ENCODE measurements at regions of chr2 and their contacts with region 1.

Region 1: GRCh38 chr2:36663851-36664695 is 32.4 kb upstream of the VIT start:
- DNase-seq: peak; percentile 76
- ATAC-seq: peak; percentile 95
- H3K4me3 ChIP-seq: peak overlapping the region; percentile 20; the same call in 1 of the 2 replicates
- H3K27ac ChIP-seq: no peak overlapping the region
- H3K4me1 ChIP-seq: peaks cover 4% of the 10 kb centered on the region; the same call in 1 of the 2 replicates
- H3K27me3 ChIP-seq: no peaks in the 10 kb centered on the region
- CTCF ChIP-seq: peak; percentile 95

Region 2: GRCh38 chr2:36461039-36461681 is 202.9 kb before region 1 on chr2:
- CTCF ChIA-PET with region 1: interaction called, 4 read pairs
- POLR2A ChIA-PET with region 1: no interaction called
- intact Hi-C with region 1: loop called (anchors 2 kb)
- DNase-seq: peak; percentile 92
- ATAC-seq: peak; percentile 91
- H3K4me3 ChIP-seq: peak overlapping the region; percentile 22; the same call in 1 of the 2 replicates
- H3K27ac ChIP-seq: peak overlapping the region; percentile 81
- H3K4me1 ChIP-seq: peaks cover 36% of the 10 kb centered on the region
- H3K27me3 ChIP-seq: no peaks in the 10 kb centered on the region
- CTCF ChIP-seq: no peak

Region 3: DNA sequence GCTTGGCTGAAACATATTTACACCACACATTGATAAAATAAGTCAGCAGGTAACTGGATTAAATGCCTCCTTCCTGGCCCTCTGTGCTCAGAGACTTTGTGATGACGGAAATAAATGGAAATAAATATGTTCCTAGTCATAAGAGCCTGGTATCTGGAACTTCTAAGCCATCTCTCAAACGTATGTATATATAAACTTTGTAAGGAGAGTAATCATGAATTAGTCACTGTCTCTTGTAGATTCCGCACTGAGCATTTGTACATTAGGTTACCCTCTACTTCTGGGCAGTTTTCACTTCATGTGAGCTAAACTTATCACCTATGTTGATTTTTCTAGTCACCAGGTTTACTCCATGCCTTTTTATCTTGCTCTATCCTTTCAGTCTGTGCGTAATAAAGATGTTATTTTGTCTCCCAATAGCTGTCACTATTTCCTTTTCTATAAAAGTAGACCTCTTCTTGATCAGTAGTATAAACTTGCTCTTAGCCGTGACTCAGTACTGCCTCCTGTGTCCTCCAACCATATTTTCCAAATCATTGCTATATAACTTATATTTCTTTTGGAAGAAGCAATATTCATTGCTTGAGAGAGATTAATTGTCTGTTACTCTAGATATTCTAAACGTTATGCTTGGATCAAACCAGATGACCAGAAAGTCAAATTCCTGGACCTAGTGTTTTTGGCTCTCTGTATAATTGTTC is 119.3 kb before region 1 on chr2:
- CTCF ChIA-PET with region 1: interaction called, 3 read pairs
- POLR2A ChIA-PET with region 1: no interaction called
- intact Hi-C with region 1: loop called (anchors 1 kb)
- DNase-seq: peak; percentile 35
- ATAC-seq: peak; percentile 5; the same call in 1 of the 2 replicates
- H3K4me3 ChIP-seq: no peak overlapping the region
- H3K27ac ChIP-seq: no peak overlapping the region
- H3K4me1 ChIP-seq: peaks cover 1% of the 10 kb centered on the region
- H3K27me3 ChIP-seq: no peaks in the 10 kb centered on the region
- CTCF ChIP-seq: peak; percentile 65

Region 4: GRCh38 chr2:36561237-36561944 is 102.7 kb before region 1 on chr2:
- CTCF ChIA-PET with region 1: interaction called, 4 read pairs
- POLR2A ChIA-PET with region 1: no interaction called
- intact Hi-C with region 1: loop called (anchors 1 kb)
- DNase-seq: peak; percentile 97
- ATAC-seq: peak; percentile 76
- H3K4me3 ChIP-seq: peak overlapping the region; percentile 45
- H3K27ac ChIP-seq: peak overlapping the region; percentile 93
- H3K4me1 ChIP-seq: peaks cover 86% of the 10 kb centered on the region
- H3K27me3 ChIP-seq: no peaks in the 10 kb centered on the region
- CTCF ChIP-seq: no peak

Region 5: DNA sequence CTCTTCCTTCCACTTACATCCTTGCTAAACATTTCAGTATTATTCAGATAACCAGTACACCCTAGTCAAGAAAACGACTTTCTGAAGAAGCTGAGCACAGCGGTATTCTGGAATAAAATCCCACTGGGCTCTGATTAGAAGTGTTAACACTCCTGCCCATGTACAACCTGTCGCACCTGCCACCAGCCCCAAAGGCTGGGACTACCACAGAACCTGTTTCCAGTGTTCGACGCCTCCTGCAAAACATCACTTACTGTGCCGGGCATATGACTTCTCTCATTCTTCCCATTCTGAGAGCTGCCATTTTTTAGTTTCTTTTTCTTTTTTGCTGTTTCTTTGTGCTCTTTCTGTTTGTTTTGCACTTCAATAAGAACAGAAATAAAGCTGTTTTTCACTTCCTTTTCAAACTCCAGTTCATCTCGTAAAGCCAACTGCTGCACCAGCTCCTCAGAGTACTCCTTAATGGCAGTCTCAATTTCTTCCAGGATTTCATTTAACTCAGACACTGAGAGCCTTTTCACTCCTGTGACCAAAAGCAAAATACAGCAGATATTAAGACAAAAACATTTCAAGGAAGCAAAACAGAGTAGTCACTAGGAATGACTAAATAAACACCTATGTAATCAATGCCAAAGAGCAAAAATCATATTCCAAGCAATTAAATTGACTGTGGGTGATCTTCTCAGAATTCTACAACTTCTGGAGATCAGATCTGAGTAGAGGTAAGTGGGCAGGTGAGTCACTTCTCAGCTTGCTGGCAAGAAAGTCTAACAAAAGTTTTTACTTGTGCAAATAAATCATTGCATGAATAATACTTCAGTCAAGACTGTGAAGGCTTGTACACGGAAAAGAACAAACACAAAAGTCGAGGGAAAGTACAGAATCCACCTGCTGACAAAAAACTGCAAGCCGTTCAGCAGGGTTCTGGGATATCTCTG is 85.5 kb before region 1 on chr2:
- CTCF ChIA-PET with region 1: no interaction called
- POLR2A ChIA-PET with region 1: interaction called, 4 read pairs
- intact Hi-C with region 1: loop called (anchors 1 kb)
- DNase-seq: peak; percentile 94
- ATAC-seq: peak; percentile 82
- H3K4me3 ChIP-seq: peak overlapping the region; percentile 60
- H3K27ac ChIP-seq: peak overlapping the region; percentile 76
- H3K4me1 ChIP-seq: peaks cover 30% of the 10 kb centered on the region
- H3K27me3 ChIP-seq: no peaks in the 10 kb centered on the region
- CTCF ChIP-seq: no peak

Region 6: DNA sequence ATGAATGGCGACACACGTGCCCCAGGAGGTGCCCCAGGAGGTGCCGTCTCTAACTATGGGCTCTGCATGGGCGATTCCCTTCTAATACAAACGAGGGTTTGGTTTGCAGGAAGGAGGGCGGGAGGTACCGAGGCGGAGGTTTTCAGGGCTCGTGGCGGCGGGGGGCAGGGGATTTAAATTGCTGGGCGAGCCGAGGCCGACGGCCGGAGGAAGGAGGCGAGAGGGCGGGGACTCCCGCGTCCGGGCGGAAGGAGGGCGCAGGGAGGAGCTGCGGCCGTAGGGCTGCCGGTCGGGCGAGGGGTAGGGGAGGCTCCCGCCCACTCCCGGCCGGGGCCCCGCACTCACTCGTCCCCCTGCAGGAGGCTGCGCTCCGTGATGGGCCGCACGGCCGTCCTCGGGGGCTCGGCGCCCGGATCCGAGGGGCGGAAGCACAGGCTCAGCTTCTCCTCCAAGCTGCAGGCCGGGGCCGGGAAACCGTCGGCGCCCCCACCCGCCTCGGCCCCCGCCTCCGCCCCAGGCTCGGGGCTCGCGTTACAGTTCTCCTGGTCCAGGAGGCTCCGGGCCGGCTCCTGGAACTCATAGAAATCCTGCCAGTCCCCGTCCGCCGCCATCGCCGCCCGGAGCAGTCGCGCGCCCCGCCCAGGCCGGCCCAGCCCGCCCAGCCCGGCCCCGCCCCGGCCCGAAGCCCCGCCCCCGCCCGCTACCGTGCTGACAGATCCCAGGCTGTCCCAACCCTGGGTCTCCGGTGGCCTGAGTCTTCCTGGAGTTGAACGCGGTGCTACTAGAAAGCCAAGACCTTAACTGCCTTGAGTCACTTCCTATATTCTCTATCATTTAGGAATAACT is 66.3 kb before region 1 on chr2 and contains the start of gene FEZ2:
- CTCF ChIA-PET with region 1: no interaction called
- POLR2A ChIA-PET with region 1: no interaction called
- intact Hi-C with region 1: loop called (anchors 5 kb)
- DNase-seq: peak; percentile 85
- ATAC-seq: peak; percentile 95
- H3K4me3 ChIP-seq: peak within 1 kb of the TSS; percentile 89
- H3K27ac ChIP-seq: peak within 1 kb of the TSS; percentile 43
- H3K4me1 ChIP-seq: peaks cover 20% of the 10 kb centered on the region
- H3K27me3 ChIP-seq: no peaks in the 10 kb centered on the region
- CTCF ChIP-seq: no peak
- total RNA-seq, gene FEZ2: 52.6 and 62.1 TPM in 2 replicates

Region 7: DNA sequence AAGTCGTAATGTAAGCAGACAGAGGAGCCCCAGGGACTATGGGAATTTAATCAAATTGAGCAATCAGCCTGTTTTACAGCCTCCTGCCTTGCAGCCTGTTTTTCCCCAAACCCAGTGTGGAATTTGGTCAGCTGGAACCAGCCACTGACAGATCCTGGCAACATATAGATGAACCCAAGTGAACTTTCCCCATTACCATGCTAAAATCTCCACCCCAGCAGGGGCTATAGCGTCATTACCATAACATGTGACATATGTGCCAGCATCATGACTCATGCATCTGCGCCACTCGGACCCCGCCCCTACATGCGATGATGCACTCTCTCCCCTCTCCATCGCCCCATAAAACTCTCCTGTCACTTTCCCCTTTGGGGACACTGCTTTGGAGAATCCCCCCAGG is 48.9 kb before region 1 on chr2:
- CTCF ChIA-PET with region 1: no interaction called
- POLR2A ChIA-PET with region 1: no interaction called
- intact Hi-C with region 1: no loop called
- DNase-seq: no peak
- ATAC-seq: no peak
- H3K4me3 ChIP-seq: no peak overlapping the region
- H3K27ac ChIP-seq: no peak overlapping the region
- H3K4me1 ChIP-seq: no peaks in the 10 kb centered on the region
- H3K27me3 ChIP-seq: no peaks in the 10 kb centered on the region
- CTCF ChIP-seq: no peak

Region 8: DNA sequence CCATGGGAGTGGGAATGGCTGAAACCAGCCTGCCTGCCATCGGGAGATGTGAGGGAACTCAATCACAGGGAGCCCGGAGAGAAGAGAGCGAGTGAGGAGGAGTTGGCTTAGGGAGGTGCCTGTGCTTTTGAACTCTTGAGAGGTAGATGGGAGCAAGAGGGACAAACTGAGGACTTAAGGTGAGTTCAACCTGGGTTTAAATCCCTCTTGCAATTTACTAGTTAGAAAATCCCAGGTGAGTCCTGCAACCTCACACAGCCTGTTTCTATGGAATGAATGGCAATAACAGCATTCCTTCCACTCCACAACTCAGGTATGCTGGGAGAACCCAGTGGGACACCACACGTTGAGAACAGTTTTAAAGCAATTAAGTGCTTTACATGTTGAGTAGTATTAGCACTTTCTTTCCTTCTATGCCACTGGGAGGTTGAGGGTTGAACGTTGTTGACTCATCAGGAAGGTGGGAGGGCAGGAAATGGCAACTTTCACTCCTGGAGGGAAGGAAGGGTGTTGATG is 89.7 kb after region 1 on chr2:
- CTCF ChIA-PET with region 1: no interaction called
- POLR2A ChIA-PET with region 1: no interaction called
- intact Hi-C with region 1: no loop called
- DNase-seq: no peak
- ATAC-seq: no peak
- H3K4me3 ChIP-seq: no peak overlapping the region
- H3K27ac ChIP-seq: no peak overlapping the region
- H3K4me1 ChIP-seq: no peaks in the 10 kb centered on the region
- H3K27me3 ChIP-seq: peaks cover 24% of the 10 kb centered on the region; the same call in 1 of the 2 replicates
- CTCF ChIP-seq: no peak

Region 9: GRCh38 chr2:36892805-36893204 is 228.7 kb after region 1 on chr2:
- CTCF ChIA-PET with region 1: no interaction called
- POLR2A ChIA-PET with region 1: no interaction called
- intact Hi-C with region 1: no loop called
- DNase-seq: no peak
- ATAC-seq: no peak
- H3K4me3 ChIP-seq: no peak overlapping the region
- H3K27ac ChIP-seq: no peak overlapping the region
- H3K4me1 ChIP-seq: peaks cover 17% of the 10 kb centered on the region
- H3K27me3 ChIP-seq: no peaks in the 10 kb centered on the region
- CTCF ChIP-seq: no peak